ENCODE measurements at regions of chr16 and their contacts with region 1.

Region 1: DNA sequence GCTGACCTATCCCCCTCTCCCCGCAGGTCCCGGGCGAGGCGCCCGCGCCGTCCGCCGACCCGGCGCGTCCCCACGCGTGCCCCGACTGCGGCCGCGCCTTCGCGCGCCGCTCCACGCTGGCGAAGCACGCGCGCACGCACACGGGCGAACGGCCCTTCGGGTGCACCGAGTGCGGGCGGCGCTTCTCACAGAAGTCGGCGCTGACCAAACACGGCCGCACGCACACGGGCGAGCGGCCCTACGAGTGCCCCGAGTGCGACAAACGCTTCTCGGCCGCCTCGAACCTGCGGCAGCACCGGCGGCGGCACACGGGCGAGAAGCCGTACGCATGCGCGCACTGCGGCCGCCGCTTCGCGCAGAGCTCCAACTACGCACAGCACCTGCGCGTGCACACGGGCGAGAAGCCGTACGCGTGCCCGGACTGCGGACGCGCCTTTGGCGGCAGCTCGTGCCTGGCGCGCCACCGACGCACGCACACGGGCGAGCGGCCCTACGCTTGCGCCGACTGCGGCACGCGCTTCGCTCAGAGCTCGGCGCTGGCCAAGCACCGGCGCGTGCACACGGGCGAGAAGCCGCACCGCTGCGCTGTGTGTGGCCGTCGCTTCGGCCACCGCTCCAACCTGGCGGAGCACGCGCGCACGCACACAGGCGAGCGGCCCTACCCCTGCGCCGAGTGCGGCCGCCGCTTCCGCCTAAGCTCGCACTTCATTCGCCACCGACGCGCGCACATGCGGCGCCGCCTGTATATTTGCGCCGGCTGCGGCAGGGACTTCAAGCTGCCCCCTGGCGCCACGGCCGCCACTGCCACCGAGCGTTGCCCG is 10.3 kb downstream of the ZNF771 start:
- DNase-seq: peak; percentile 90 to 96 (median 95)
- H3K4me3 ChIP-seq: peak overlapping the region; percentile 57 to 82 (median 66)
- H3K27ac ChIP-seq: peak overlapping the region in 1 of 2 experiments; percentile 54
- H3K4me1 ChIP-seq: peaks cover 0 to 18% (median 15%) of the 10 kb centered on the region in 4 experiments
- H3K27me3 ChIP-seq: no peaks in the 10 kb centered on the region

Region 2: DNA sequence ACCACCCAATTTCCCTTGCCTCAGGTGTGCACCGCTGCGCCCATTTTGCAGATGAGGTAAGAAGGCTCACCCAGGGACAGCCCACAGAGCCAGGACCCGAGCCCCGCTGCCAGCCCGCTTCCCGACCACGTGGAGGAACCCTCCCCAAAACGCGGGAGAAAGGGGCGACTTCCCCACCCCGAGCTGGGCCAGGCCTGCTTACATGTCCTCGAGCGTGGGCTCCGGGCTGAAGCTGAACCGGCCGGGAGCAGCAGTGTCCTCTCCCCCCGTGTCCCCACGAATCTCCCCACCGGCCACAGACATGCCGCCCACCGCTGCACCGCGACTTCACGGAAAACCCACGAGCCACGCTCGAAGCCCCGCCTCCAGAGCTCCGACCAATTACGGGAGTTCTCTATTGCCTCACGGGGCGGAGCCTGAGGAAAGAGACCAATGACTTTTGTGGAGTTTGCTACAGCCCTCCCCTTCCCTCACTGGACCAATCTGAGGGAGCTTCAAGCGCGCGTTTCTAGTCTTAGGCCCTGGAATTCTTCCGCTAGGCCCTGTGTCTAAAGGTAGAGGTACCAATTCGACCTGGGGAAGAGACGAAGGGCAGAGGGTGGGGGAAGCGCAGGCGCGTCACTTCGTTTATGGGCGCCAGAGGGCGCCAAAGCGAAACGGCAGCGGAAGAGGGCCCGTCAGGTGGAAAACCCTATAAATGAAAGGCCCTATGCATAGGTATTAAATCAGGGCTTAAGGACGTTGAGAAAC is 12.1 kb after region 1 on chr16 and contains the start of gene DCTPP1:
- CTCF ChIA-PET with region 1: interaction called, 10 read pairs
- POLR2A ChIA-PET with region 1: interaction called, 9 read pairs
- DNase-seq: peak; percentile 100
- H3K4me3 ChIP-seq: peak within 1 kb of the TSS; percentile 36 to 89 (median 82)
- H3K27ac ChIP-seq: peak within 1 kb of the TSS; percentile 46 to 76
- H3K4me1 ChIP-seq: peaks cover 3 to 21% (median 16%) of the 10 kb centered on the region in 4 experiments
- H3K27me3 ChIP-seq: no peaks in the 10 kb centered on the region

Measured in common myeloid progenitor, CD34-positive (primary cell).